ENCODE measurements at regions of chr14 and their contacts with region 1.

Region 1: GRCh38 chr14:34322940-34323418 is 139.1 kb downstream of the SPTSSA start:
- DNase-seq: peak; percentile 11 to 82 (median 54)
- ATAC-seq: peak; percentile 47 to 72 (median 72)
- H3K4me3 ChIP-seq: no peak overlapping the region
- H3K4me3 Mint-ChIP-seq: no peak overlapping the region
- H3K27ac ChIP-seq: no peak overlapping the region
- H3K27ac Mint-ChIP-seq: no peak overlapping the region
- H3K4me1 ChIP-seq: no peaks in the 10 kb centered on the region
- H3K4me1 Mint-ChIP-seq: peaks cover 1 to 8% (median 4%) of the 10 kb centered on the region in 3 donors
- H3K27me3 ChIP-seq: no peaks in the 10 kb centered on the region
- H3K27me3 Mint-ChIP-seq: peaks cover 4 to 5% of the 10 kb centered on the region in 2 donors

Region 2: GRCh38 chr14:32835924-32836323 is 1487.1 kb before region 1 on chr14:
- CTCF ChIA-PET with region 1: no interaction called
- POLR2A ChIA-PET with region 1: interaction called in 1 of 2 experiments, 11 read pairs
- DNase-seq: no peak
- ATAC-seq: no peak
- H3K4me3 ChIP-seq: no peak overlapping the region
- H3K4me3 Mint-ChIP-seq: no peak overlapping the region
- H3K27ac ChIP-seq: no peak overlapping the region
- H3K27ac Mint-ChIP-seq: no peak overlapping the region
- H3K4me1 ChIP-seq: no peaks in the 10 kb centered on the region
- H3K4me1 Mint-ChIP-seq: no peaks in the 10 kb centered on the region
- H3K27me3 ChIP-seq: no peaks in the 10 kb centered on the region
- H3K27me3 Mint-ChIP-seq: no peaks in the 10 kb centered on the region

Region 3: GRCh38 chr14:33432407-33433023 is 890.5 kb before region 1 on chr14:
- CTCF ChIA-PET with region 1: interaction called in 1 of 2 experiments, 11 read pairs
- POLR2A ChIA-PET with region 1: no interaction called
- DNase-seq: no peak
- ATAC-seq: no peak
- H3K4me3 ChIP-seq: no peak overlapping the region
- H3K4me3 Mint-ChIP-seq: no peak overlapping the region
- H3K27ac ChIP-seq: no peak overlapping the region
- H3K27ac Mint-ChIP-seq: no peak overlapping the region
- H3K4me1 ChIP-seq: peaks cover 0 to 9% of the 10 kb centered on the region in 2 experiments
- H3K4me1 Mint-ChIP-seq: peaks cover 5 to 13% (median 11%) of the 10 kb centered on the region in 3 donors
- H3K27me3 ChIP-seq: no peaks in the 10 kb centered on the region
- H3K27me3 Mint-ChIP-seq: no peaks in the 10 kb centered on the region

Region 4: GRCh38 chr14:34536951-34537676 is 214.1 kb after region 1 on chr14:
- CTCF ChIA-PET with region 1: interaction called in 1 of 2 experiments, 11 read pairs
- POLR2A ChIA-PET with region 1: no interaction called
- DNase-seq: no peak
- ATAC-seq: no peak
- H3K4me3 ChIP-seq: no peak overlapping the region
- H3K4me3 Mint-ChIP-seq: peak overlapping the region in 2 of 3 donors; percentile 28 to 99
- H3K27ac ChIP-seq: no peak overlapping the region
- H3K27ac Mint-ChIP-seq: no peak overlapping the region
- H3K4me1 ChIP-seq: peaks cover 18 to 32% of the 10 kb centered on the region in 2 experiments
- H3K4me1 Mint-ChIP-seq: peaks cover 41 to 47% (median 42%) of the 10 kb centered on the region in 3 donors
- H3K27me3 ChIP-seq: no peaks in the 10 kb centered on the region
- H3K27me3 Mint-ChIP-seq: no peaks in the 10 kb centered on the region